ACHN (cell line): ENCODE measurements at regions of chr10 and their contacts with region 1.

Region 1: GRCh38 chr10:47438857-47439474 is 44.9 kb downstream of the ANXA8 start:
- DNase-seq: peak; percentile 79

Region 2: GRCh38 chr10:46544989-46545791 is 893.8 kb before region 1 on chr10:
- in situ Hi-C with region 1: loop called (anchors 25 kb)
- DNase-seq: peak; percentile 49

Region 3: GRCh38 chr10:47176903-47177868 is 261.8 kb before region 1 on chr10:
- in situ Hi-C with region 1: no loop called
- DNase-seq: no peak